Breast epithelium (tissue), 4 donors: ENCODE measurements at regions of chr22 and their contacts with region 1.

Region 1: DNA sequence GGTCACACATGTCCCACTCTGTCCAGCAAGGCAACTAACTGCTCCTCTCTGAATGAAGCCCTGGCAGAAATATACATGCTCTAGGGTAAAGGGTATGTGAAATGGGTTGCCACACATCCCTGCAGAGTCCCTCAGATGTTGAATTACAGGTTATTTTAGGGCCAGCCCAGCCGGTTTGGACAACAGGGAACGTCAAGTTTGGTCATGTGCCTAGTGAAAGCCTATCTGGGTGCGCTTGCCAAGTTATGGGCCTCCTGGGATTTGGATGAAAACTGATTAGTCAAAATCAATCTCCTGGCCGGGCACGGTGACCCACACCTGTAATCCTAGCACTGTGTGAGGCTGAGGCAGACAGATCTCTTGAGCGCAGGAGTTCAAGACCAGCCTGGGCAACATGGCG is 10.4 kb downstream of the AP1B1 start:
- DNase-seq: peak; percentile 65 to 81
- H3K4me3 ChIP-seq: no peak overlapping the region
- H3K27ac ChIP-seq: peak overlapping the region; percentile 59 to 85
- H3K4me1 ChIP-seq: no peaks in the 10 kb centered on the region
- H3K27me3 ChIP-seq: no peaks in the 10 kb centered on the region
- CTCF ChIP-seq: no peak
- POLR2A ChIP-seq: no peak

Region 2: GRCh38 chr22:29353860-29354259 is 24.1 kb before region 1 on chr22:
- intact Hi-C with region 1: loop called (anchors 1 kb)
- DNase-seq: no peak
- H3K4me3 ChIP-seq: no peak overlapping the region
- H3K27ac ChIP-seq: no peak overlapping the region
- H3K4me1 ChIP-seq: no peaks in the 10 kb centered on the region
- H3K27me3 ChIP-seq: no peaks in the 10 kb centered on the region
- CTCF ChIP-seq: no peak
- POLR2A ChIP-seq: no peak

Region 3: DNA sequence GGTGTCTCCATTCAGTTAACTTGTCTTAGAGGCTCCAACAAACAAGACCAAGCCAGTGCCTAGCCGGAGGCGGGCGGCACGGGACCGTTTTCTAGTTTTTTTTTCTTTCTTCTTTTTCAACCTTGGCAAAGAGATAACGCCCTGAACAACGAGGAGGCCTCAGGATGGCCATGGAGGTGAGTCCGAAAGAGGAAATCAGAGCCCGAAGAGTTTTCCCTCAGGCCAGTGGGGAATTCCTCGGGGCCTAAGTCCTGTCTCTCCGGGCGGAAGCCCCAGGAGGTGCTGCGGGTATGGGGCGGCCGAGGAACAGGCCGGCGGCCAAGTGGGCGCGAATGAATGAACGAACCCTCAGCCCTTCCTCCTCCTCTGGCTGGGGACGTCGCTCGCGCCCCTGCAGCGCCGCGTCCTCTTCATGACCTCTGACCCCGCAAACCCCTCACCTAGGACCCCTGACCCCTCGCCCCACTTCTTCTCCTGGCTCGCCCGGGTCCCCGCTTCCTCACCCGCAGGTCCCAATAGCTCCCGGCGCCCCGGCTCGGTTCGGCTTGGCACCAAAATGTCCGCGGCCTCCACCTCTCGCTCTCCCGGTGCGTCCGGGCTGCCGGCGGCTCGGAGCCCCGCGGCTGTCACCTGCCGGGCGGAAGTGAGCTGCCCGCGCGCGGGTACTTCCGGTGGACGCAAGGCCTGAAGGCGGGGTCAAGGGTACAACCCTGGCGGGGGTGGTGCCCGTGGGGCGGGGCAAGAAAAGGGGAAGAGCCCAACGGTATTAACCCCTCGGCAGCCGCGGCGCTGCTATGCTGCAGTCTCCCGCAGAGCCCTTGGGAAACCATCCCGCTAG is 10.2 kb after region 1 on chr22 and contains the start of gene AP1B1:
- intact Hi-C with region 1: no loop called
- DNase-seq: peak; percentile 80 to 91
- H3K4me3 ChIP-seq: peak within 1 kb of the TSS; percentile 72 to 92 (median 89)
- H3K27ac ChIP-seq: peak within 1 kb of the TSS; percentile 84 to 91
- H3K4me1 ChIP-seq: peaks cover 0 to 7% of the 10 kb centered on the region in 2 donors
- H3K27me3 ChIP-seq: no peaks in the 10 kb centered on the region
- CTCF ChIP-seq: no peak
- POLR2A ChIP-seq: no peak
- total RNA-seq, gene AP1B1: 55.7 to 58.7 (median 58.2) TPM